ENCODE measurements at regions of chr18 and their contacts with region 1.

Region 1: DNA sequence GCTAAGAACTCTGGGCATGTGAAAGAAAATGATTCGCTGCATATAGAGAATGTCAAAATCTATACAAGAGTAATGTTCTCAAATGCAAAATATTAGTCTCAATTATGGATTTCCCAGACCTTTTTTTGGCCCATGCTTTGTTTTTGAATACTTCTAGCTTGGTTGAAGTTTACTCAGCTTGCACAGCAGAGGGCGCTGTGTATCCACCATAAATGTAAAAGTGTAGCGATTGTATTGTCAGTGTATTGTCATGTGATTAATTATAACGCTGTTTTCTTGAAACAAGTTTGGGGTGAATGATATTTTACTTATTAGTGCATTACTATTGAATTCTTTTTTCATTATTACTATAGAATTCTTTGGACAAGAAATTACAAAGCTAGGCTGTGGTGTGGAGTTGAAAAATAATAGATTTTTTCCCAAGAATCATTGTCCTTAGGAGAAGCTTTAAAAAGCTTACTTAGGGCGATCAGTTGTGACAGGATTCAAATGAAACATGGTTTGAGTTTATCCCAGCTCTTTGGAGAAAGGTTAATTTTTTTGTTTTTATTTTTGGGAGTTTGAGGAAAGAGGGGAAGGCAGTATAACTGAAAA is 98.3 kb downstream of the PIK3C3 start:
- DNase-seq: peak; percentile 32
- ATAC-seq: peak; percentile 72 to 80

Region 2: GRCh38 chr18:42141439-42141838 is 88.2 kb after region 1 on chr18:
- intact Hi-C with region 1: no loop called
- DNase-seq: no peak
- ATAC-seq: no peak

Region 3: GRCh38 chr18:43396266-43396665 is 1343.0 kb after region 1 on chr18:
- intact Hi-C with region 1: loop called in 1 of 2 experiments (anchors 10 kb)
- DNase-seq: no peak
- ATAC-seq: no peak

Measured in left cardiac atrium (tissue), 4 donors.